HEK293 (cell line): ENCODE measurements at regions of chr15 and their contacts with region 1.

Region 1: GRCh38 chr15:58770857-58771620 is at the start of gene MINDY2:
- H3K4me3 ChIP-seq: peak within 1 kb of the TSS; percentile 97
- H3K27ac ChIP-seq: peak within 1 kb of the TSS; percentile 81
- H3K4me1 ChIP-seq: no peaks in the 10 kb centered on the region; the same call in 1 of the 2 replicates
- CTCF ChIP-seq: peak; percentile 92

Region 2: GRCh38 chr15:58726867-58727266 is 44.2 kb before region 1 on chr15:
- CTCF ChIA-PET with region 1: no interaction called
- POLR2A ChIA-PET with region 1: interaction called, 13 read pairs
- H3K4me3 ChIP-seq: no peak overlapping the region
- H3K27ac ChIP-seq: no peak overlapping the region
- H3K4me1 ChIP-seq: no peaks in the 10 kb centered on the region
- CTCF ChIP-seq: no peak

Region 3: DNA sequence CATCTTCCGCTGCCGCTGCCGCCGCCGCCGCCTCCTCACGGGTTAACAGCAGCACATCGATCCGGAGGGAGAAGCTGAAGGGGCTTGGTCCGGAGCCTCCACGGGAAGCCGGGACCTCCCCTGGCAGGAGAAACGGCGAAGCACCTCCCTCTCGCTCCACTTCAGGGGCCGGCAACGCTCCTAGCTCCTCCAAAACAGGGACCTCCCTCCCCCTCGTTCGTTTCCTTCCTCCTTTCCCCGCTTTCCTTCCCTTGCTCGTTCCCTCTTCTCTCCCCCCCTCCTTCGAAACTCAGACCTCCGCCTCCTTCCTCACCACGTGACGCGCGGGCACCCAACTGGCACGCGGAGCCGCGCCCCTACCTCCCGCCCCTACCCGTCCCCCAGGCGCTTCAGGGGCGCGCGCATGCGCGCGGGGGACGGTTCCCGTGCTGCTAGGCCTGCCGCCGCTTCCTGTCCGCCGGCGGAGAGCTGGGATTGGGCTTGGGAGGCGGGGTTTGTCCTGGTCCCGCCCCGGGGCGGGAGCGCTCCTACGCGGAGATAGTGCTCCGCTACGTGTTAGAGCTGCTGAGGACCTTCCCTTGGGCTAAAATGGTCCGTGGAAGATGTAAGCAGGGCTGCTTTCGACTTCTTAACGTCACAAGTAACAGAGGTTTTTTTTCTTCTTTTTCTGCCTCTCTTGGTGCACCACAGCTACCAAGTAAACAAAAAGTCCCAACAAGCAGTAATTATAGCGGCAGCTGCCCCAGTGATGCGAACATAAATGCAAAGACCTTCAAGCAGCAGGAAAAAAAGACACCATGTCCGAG is 21.3 kb before region 1 on chr15 and contains the start of gene ADAM10:
- CTCF ChIA-PET with region 1: interaction called, 5 read pairs
- POLR2A ChIA-PET with region 1: interaction called, 62 read pairs
- H3K4me3 ChIP-seq: peak within 1 kb of the TSS; percentile 87
- H3K27ac ChIP-seq: peak within 1 kb of the TSS; percentile 93
- H3K4me1 ChIP-seq: 0 out of 2 replicates have a peak, but pooled peaks cover 6% of the 10 kb centered on the region
- CTCF ChIP-seq: no peak

Region 4: GRCh38 chr15:58909616-58910015 is 138.6 kb after region 1 on chr15:
- CTCF ChIA-PET with region 1: no interaction called
- POLR2A ChIA-PET with region 1: no interaction called
- H3K4me3 ChIP-seq: no peak overlapping the region
- H3K27ac ChIP-seq: no peak overlapping the region
- H3K4me1 ChIP-seq: no peaks in the 10 kb centered on the region
- CTCF ChIP-seq: no peak